ENCODE measurements at regions of chr2 and their contacts with region 1.

Region 1: DNA sequence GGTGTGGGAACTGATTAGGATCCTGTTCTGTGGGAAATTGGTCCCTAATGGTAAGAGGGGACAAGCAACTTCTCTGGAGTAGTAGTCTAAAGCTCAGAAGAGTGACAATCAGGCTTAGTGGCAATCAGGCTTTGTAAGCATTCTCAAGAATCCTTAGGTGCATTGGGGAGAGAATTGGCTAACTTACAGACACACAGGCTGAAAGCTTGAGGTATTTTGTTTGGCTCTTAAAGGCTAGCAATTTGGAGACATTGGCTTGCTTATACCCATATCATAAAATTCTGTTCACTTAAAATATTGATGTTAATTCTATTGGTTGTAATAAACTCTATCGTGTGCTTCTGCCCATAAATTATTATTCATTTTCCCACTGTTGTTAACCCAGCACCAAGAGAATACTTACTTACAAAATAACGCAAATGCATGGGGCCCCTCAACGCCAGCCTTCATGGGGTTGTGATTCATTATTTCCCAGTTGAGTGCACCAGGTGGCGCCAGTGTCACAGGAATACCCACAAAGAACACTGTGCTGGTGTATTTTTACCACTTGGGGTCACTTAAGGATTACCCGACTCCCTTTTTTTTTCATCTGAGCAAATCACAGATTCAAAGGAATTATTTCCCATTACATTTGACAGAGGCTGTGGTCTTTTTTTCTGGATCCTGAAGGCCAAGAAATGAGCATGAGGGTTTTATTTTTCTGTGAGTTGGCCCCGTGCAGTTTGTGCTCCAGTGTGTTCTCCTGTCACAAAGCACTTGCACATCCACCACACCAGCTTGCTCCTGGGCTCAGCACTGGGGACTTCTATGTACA is 45.5 kb downstream of the DDX1 start:
- DNase-seq: peak; percentile 71
- ATAC-seq: peak; percentile 84
- H3K4me3 ChIP-seq: no peak overlapping the region
- H3K27ac ChIP-seq: peak overlapping the region; percentile 2
- H3K4me1 ChIP-seq: peaks cover 37% of the 10 kb centered on the region
- H3K27me3 ChIP-seq: no peaks in the 10 kb centered on the region
- CTCF ChIP-seq: peak; percentile 91
- EP300 ChIP-seq: no peak
- POLR2A ChIP-seq: no peak
- RAD21 ChIP-seq: peak; percentile 94

Region 2: GRCh38 chr2:15730545-15731212 is 93.5 kb after region 1 on chr2:
- CTCF ChIA-PET with region 1: no interaction called
- POLR2A ChIA-PET with region 1: no interaction called
- in situ Hi-C with region 1: loop called (anchors 25 kb)
- intact Hi-C with region 1: no loop called
- DNase-seq: peak; percentile 80
- ATAC-seq: peak; percentile 72
- H3K4me3 ChIP-seq: no peak overlapping the region
- H3K27ac ChIP-seq: no peak overlapping the region
- H3K4me1 ChIP-seq: peaks cover 38% of the 10 kb centered on the region
- H3K27me3 ChIP-seq: peaks cover 6 to 71% of the 10 kb centered on the region in 2 experiments; a peak in 4 of 5 replicates
- CTCF ChIP-seq: no peak
- EP300 ChIP-seq: peak in 1 of 2 experiments; percentile 55; a peak in 1 of 4 replicates
- POLR2A ChIP-seq: no peak
- RAD21 ChIP-seq: no peak

Region 3: GRCh38 chr2:15748736-15749323 is 111.7 kb after region 1 on chr2:
- CTCF ChIA-PET with region 1: interaction called, 34 read pairs
- POLR2A ChIA-PET with region 1: no interaction called
- in situ Hi-C with region 1: loop called (anchors 25 kb)
- intact Hi-C with region 1: loop called (anchors 1 kb)
- DNase-seq: peak; percentile 62
- ATAC-seq: peak; percentile 90
- H3K4me3 ChIP-seq: no peak overlapping the region
- H3K27ac ChIP-seq: no peak overlapping the region
- H3K4me1 ChIP-seq: no peaks in the 10 kb centered on the region
- H3K27me3 ChIP-seq: peaks cover 4 to 46% of the 10 kb centered on the region in 2 experiments; a peak in 4 of 5 replicates
- CTCF ChIP-seq: peak; percentile 66
- EP300 ChIP-seq: no peak
- POLR2A ChIP-seq: no peak
- RAD21 ChIP-seq: peak; percentile 58

Region 4: GRCh38 chr2:16507655-16508489 is 870.7 kb after region 1 on chr2:
- CTCF ChIA-PET with region 1: interaction called, 3 read pairs
- POLR2A ChIA-PET with region 1: no interaction called
- in situ Hi-C with region 1: loop called (anchors 10 kb)
- intact Hi-C with region 1: loop called (anchors 5 kb)
- DNase-seq: peak; percentile 21
- ATAC-seq: peak; percentile 93
- H3K4me3 ChIP-seq: peak overlapping the region in 1 of 3 experiments; percentile 31; a peak in 1 of 6 replicates
- H3K27ac ChIP-seq: no peak overlapping the region
- H3K4me1 ChIP-seq: peaks cover 12% of the 10 kb centered on the region
- H3K27me3 ChIP-seq: peaks cover 0 to 22% of the 10 kb centered on the region in 2 experiments; a peak in 3 of 5 replicates
- CTCF ChIP-seq: peak; percentile 83
- EP300 ChIP-seq: no peak
- POLR2A ChIP-seq: no peak
- RAD21 ChIP-seq: peak; percentile 89